OCI-LY7 (cell line): ENCODE measurements at regions of chr9 and their contacts with region 1.

Region 1: GRCh38 chr9:113401027-113401792 is at the start of gene ALAD:
- DNase-seq: peak; percentile 99
- H3K4me3 ChIP-seq: peak within 1 kb of the TSS; percentile 92
- H3K27ac ChIP-seq: peak within 1 kb of the TSS; percentile 12
- H3K4me1 ChIP-seq: peaks cover 12% of the 10 kb centered on the region
- CTCF ChIP-seq: peak; percentile 91
- total RNA-seq, gene ALAD: 14.3 and 19.8 TPM in 2 replicates

Region 2: GRCh38 chr9:113275157-113276131 is 125.8 kb before region 1 on chr9 and contains the starts of genes CDC26 and PRPF4:
- CTCF ChIA-PET with region 1: no interaction called
- POLR2A ChIA-PET with region 1: interaction called, 5 read pairs
- intact Hi-C with region 1: loop called (anchors 1 kb)
- DNase-seq: peak; percentile 97
- H3K4me3 ChIP-seq: peak within 1 kb of the TSS; percentile 84
- H3K27ac ChIP-seq: peak within 1 kb of the TSS; percentile 68
- H3K4me1 ChIP-seq: peaks cover 29% of the 10 kb centered on the region
- CTCF ChIP-seq: no peak
- total RNA-seq, gene CDC26: 29.9 and 42.5 TPM in 2 replicates
- total RNA-seq, gene PRPF4: 27.4 and 27.8 TPM in 2 replicates

Region 3: DNA sequence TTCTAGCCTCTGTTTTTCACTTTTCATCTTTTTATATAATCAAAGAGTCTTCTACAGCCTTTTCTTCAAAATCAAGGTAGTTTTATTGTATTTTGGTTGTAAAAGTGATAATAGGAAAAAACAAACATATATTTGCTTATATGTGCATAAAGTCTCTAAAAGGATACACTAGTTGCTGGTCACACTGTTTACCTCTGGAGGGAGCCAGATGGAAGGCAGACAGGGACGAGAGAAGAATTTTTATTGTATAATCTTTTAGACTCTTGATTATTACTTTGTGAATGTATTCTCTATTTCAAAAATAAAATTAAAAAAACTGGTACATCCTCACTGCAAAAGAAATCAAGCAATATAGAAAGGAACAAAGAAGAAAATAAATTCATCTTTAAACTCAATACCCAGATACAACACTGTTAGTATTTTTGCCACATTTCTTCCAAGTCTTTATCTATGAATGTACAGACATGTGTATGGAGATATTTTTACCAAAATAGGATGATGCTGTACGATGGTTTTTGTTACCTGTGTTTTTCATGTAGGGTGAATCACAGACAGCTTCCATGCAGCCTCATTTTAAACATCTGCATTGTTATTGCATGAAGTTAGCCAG is 91.9 kb before region 1 on chr9:
- CTCF ChIA-PET with region 1: no interaction called
- POLR2A ChIA-PET with region 1: no interaction called
- intact Hi-C with region 1: loop called (anchors 1 kb)
- DNase-seq: peak; percentile 44
- H3K4me3 ChIP-seq: no peak overlapping the region
- H3K27ac ChIP-seq: no peak overlapping the region
- H3K4me1 ChIP-seq: no peaks in the 10 kb centered on the region
- CTCF ChIP-seq: peak; percentile 95

Region 4: DNA sequence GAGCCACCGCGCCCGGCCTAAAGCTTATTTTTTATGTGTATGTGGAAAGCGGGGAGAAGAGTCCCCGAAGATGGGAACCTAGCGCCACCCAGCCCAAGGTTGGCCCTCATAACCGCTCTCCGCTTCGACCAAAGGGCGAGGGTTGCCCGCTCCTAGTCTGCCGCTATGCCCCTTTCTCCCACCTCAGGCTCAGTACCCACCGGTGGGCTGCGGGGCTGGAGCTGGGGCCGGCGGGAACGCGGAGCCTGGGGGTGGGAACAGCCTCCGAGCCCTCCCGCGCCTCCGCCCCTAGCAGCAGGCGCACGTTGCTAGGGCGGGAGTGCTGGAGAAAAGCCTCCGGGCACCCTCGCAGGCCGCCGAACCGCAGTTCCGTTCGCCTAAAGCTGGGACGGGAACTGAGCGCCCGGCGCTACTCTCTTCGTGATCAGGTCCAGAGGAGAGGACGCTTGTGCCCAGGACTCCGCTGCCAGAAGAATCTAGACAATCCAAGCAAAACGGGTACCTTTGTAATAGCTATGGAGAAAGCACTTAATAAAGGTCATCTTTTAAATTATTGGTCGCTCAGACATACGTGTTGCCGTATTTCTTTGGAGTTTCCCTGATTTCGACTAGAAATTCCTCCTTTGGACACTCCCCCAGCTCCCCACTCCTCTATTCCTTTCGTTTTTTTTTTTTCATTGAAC is 61.1 kb before region 1 on chr9 and contains the start of gene WDR31:
- CTCF ChIA-PET with region 1: interaction called, 3 read pairs
- POLR2A ChIA-PET with region 1: no interaction called
- intact Hi-C with region 1: loop called (anchors 5 kb)
- DNase-seq: peak; percentile 71
- H3K4me3 ChIP-seq: peak within 1 kb of the TSS; percentile 70
- H3K27ac ChIP-seq: no peak within 1 kb of the TSS
- H3K4me1 ChIP-seq: no peaks in the 10 kb centered on the region
- CTCF ChIP-seq: no peak
- total RNA-seq, gene WDR31: 0.19 and 0.54 TPM in 2 replicates

Region 5: GRCh38 chr9:113387560-113388230 is 13.5 kb before region 1 on chr9:
- CTCF ChIA-PET with region 1: no interaction called
- POLR2A ChIA-PET with region 1: no interaction called
- intact Hi-C with region 1: no loop called
- DNase-seq: no peak
- H3K4me3 ChIP-seq: no peak overlapping the region
- H3K27ac ChIP-seq: no peak overlapping the region
- H3K4me1 ChIP-seq: no peaks in the 10 kb centered on the region
- CTCF ChIP-seq: no peak